B cell (primary cell): ENCODE measurements at regions of chr7 and their contacts with region 1.

Region 1: DNA sequence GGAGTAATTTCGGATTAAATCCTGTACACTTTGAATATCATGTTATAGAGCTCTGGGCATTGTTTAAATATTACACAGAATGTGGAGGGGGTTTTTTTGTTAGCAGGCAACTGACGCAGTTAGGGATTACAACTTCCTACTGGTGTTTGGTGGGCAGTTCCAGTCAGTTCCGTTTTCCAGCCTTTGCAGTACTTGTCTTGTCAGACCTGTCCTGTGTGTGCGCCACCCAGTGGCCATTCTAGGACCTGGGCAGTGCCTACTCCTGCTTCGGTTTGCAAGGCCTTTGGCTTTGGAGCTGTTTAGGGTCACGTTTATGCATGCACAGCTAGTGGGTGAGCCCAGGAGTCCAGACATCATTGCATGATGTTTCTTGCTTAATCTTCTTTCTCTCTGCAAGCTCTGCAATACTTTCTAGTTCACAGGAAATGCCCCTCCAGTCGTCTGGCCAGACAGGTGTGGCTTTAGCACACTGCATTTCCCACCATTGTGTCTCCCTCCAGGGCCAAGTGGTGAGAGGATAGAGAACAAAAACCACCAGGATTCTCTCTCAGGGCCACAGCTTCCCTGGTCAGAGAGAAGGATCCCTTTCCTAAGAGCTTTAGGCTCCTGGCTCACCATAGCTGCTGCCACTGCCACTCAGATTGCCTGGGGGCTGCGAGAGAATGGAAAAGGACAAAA is 96.5 kb upstream of the TARP start:
- DNase-seq: peak; percentile 87
- ATAC-seq: peak; percentile 80
- H3K4me3 ChIP-seq: no peak overlapping the region
- H3K4me3 Mint-ChIP-seq: peak overlapping the region; percentile 2
- H3K27ac ChIP-seq: peak overlapping the region in 1 of 2 donors; percentile 32
- H3K27ac Mint-ChIP-seq: no peak overlapping the region
- H3K4me1 ChIP-seq: peaks cover 10 to 25% of the 10 kb centered on the region in 2 donors
- H3K4me1 Mint-ChIP-seq: peaks cover 18% of the 10 kb centered on the region
- H3K27me3 ChIP-seq: no peaks in the 10 kb centered on the region
- H3K27me3 Mint-ChIP-seq: no peaks in the 10 kb centered on the region
- CTCF ChIP-seq: peak; percentile 74

Region 2: GRCh38 chr7:38107486-38107893 is 262.5 kb before region 1 on chr7:
- CTCF ChIA-PET with region 1: interaction called, 21 read pairs
- POLR2A ChIA-PET with region 1: no interaction called
- intact Hi-C with region 1: loop called (anchors 1 kb)
- DNase-seq: peak; percentile 69
- ATAC-seq: peak; percentile 57
- H3K4me3 ChIP-seq: no peak overlapping the region
- H3K4me3 Mint-ChIP-seq: no peak overlapping the region
- H3K27ac ChIP-seq: no peak overlapping the region
- H3K27ac Mint-ChIP-seq: no peak overlapping the region
- H3K4me1 ChIP-seq: no peaks in the 10 kb centered on the region
- H3K4me1 Mint-ChIP-seq: no peaks in the 10 kb centered on the region
- H3K27me3 ChIP-seq: peaks cover 0 to 4% (median 2%) of the 10 kb centered on the region in 4 experiments
- H3K27me3 Mint-ChIP-seq: peaks cover 35% of the 10 kb centered on the region
- CTCF ChIP-seq: peak; percentile 94

Region 3: DNA sequence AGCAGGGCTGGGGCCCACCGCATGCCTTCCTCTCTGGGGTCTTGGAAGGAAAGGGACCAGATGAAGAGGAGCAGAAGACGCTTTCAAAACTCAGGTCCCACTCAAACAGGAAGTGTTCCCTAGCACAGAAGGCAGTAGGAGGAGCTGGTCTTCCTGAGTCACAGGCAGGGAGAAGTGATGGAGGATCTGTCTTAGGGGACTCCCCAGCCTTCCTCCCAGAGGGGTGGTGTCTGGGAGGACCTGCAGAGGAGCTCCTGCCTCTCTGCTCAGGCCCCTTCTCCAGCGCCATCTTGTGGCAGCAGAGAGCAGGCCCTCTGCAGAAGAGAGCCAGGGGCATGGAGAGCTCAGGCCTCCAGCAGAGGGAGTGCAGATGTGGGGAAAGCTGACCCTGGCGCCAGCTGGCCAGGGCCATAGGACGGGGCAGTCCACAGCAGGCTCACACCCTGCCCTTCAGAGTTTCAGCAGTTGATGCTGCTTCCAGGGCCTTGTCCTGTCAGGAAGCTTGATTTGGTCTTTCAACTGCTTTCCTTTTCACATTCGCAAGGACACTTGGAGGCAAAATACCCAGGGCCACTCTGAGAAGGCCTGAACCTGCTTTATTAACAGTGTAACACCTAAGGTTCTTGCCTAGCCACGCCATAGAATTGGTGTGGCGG is 34.3 kb before region 1 on chr7:
- CTCF ChIA-PET with region 1: interaction called, 64 read pairs
- POLR2A ChIA-PET with region 1: no interaction called
- intact Hi-C with region 1: no loop called
- DNase-seq: peak; percentile 86
- ATAC-seq: peak; percentile 98
- H3K4me3 ChIP-seq: no peak overlapping the region
- H3K4me3 Mint-ChIP-seq: peak overlapping the region; percentile 11
- H3K27ac ChIP-seq: no peak overlapping the region
- H3K27ac Mint-ChIP-seq: peak overlapping the region; percentile 13
- H3K4me1 ChIP-seq: peaks cover 5 to 16% of the 10 kb centered on the region in 2 donors
- H3K4me1 Mint-ChIP-seq: peaks cover 15% of the 10 kb centered on the region
- H3K27me3 ChIP-seq: no peaks in the 10 kb centered on the region
- H3K27me3 Mint-ChIP-seq: no peaks in the 10 kb centered on the region
- CTCF ChIP-seq: peak; percentile 96

Region 4: DNA sequence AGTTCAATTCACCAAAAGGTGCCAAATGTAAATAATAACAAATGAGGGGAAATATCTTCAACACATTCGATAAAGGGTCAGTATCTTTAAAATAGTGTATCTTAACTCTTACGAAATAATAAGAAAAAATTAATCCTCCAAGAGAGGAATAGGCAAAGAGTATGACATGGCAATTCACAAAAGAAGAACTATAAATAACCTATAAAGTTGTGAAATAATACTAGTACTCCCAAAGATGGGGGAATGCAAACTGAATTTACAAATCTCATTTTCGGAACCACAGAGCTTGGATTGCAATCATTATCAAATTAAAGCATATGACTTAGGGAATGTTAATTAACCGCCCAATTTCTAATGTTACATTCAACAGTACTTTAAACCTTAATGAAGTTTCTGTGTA is 18.4 kb before region 1 on chr7:
- CTCF ChIA-PET with region 1: interaction called, 61 read pairs
- POLR2A ChIA-PET with region 1: no interaction called
- intact Hi-C with region 1: no loop called
- DNase-seq: no peak
- ATAC-seq: no peak
- H3K4me3 ChIP-seq: no peak overlapping the region
- H3K4me3 Mint-ChIP-seq: no peak overlapping the region
- H3K27ac ChIP-seq: no peak overlapping the region
- H3K27ac Mint-ChIP-seq: no peak overlapping the region
- H3K4me1 ChIP-seq: peaks cover 10 to 34% of the 10 kb centered on the region in 2 donors
- H3K4me1 Mint-ChIP-seq: peaks cover 24% of the 10 kb centered on the region
- H3K27me3 ChIP-seq: no peaks in the 10 kb centered on the region
- H3K27me3 Mint-ChIP-seq: no peaks in the 10 kb centered on the region
- CTCF ChIP-seq: no peak

Region 5: GRCh38 chr7:38382684-38383083 is 12.7 kb after region 1 on chr7:
- CTCF ChIA-PET with region 1: interaction called, 51 read pairs
- POLR2A ChIA-PET with region 1: no interaction called
- intact Hi-C with region 1: no loop called
- DNase-seq: no peak
- ATAC-seq: no peak
- H3K4me3 ChIP-seq: no peak overlapping the region
- H3K4me3 Mint-ChIP-seq: no peak overlapping the region
- H3K27ac ChIP-seq: no peak overlapping the region
- H3K27ac Mint-ChIP-seq: no peak overlapping the region
- H3K4me1 ChIP-seq: no peaks in the 10 kb centered on the region
- H3K4me1 Mint-ChIP-seq: no peaks in the 10 kb centered on the region
- H3K27me3 ChIP-seq: no peaks in the 10 kb centered on the region
- H3K27me3 Mint-ChIP-seq: no peaks in the 10 kb centered on the region
- CTCF ChIP-seq: no peak

Region 6: GRCh38 chr7:38428041-38428440 is 58.1 kb after region 1 on chr7:
- CTCF ChIA-PET with region 1: no interaction called
- POLR2A ChIA-PET with region 1: no interaction called
- intact Hi-C with region 1: no loop called
- DNase-seq: no peak
- ATAC-seq: no peak
- H3K4me3 ChIP-seq: no peak overlapping the region
- H3K4me3 Mint-ChIP-seq: no peak overlapping the region
- H3K27ac ChIP-seq: no peak overlapping the region
- H3K27ac Mint-ChIP-seq: no peak overlapping the region
- H3K4me1 ChIP-seq: peaks cover 40 to 54% of the 10 kb centered on the region in 2 donors
- H3K4me1 Mint-ChIP-seq: peaks cover 62% of the 10 kb centered on the region
- H3K27me3 ChIP-seq: no peaks in the 10 kb centered on the region
- H3K27me3 Mint-ChIP-seq: peaks cover 4% of the 10 kb centered on the region
- CTCF ChIP-seq: no peak

Region 7: DNA sequence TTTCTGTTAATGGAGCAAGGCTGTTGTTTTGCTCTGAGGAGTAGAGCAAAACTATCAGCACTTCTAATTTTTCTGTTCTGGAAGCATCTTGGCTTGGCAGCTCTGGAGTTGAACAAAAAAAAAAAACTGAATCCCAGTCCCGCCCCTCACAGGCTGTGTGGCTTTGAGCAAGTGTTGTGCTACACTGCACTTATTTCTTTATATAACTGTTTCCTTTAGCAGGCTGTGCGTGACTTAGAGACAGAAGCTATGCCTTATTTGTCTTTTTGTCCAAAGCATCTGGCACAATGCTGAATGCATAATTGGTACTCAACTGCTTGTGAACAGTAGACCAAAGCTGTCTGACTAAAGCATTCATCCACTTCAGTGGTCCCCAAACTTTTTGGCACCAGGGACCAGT is 165.1 kb after region 1 on chr7:
- CTCF ChIA-PET with region 1: no interaction called
- POLR2A ChIA-PET with region 1: no interaction called
- intact Hi-C with region 1: no loop called
- DNase-seq: no peak
- ATAC-seq: no peak
- H3K4me3 ChIP-seq: no peak overlapping the region
- H3K4me3 Mint-ChIP-seq: no peak overlapping the region
- H3K27ac ChIP-seq: no peak overlapping the region
- H3K27ac Mint-ChIP-seq: no peak overlapping the region
- H3K4me1 ChIP-seq: peaks cover 0 to 3% of the 10 kb centered on the region in 2 donors
- H3K4me1 Mint-ChIP-seq: peaks cover 7% of the 10 kb centered on the region
- H3K27me3 ChIP-seq: peaks cover 0 to 3% (median under 1%) of the 10 kb centered on the region in 4 experiments
- H3K27me3 Mint-ChIP-seq: peaks cover 17% of the 10 kb centered on the region
- CTCF ChIP-seq: no peak

Region 8: GRCh38 chr7:38585572-38586354 is 215.8 kb after region 1 on chr7:
- CTCF ChIA-PET with region 1: no interaction called
- POLR2A ChIA-PET with region 1: no interaction called
- intact Hi-C with region 1: no loop called
- DNase-seq: no peak
- ATAC-seq: no peak
- H3K4me3 ChIP-seq: no peak overlapping the region
- H3K4me3 Mint-ChIP-seq: no peak overlapping the region
- H3K27ac ChIP-seq: no peak overlapping the region
- H3K27ac Mint-ChIP-seq: no peak overlapping the region
- H3K4me1 ChIP-seq: no peaks in the 10 kb centered on the region
- H3K4me1 Mint-ChIP-seq: no peaks in the 10 kb centered on the region
- H3K27me3 ChIP-seq: peaks cover 0 to 3% (median 0%) of the 10 kb centered on the region in 4 experiments
- H3K27me3 Mint-ChIP-seq: peaks cover 18% of the 10 kb centered on the region
- CTCF ChIP-seq: no peak